Mucosa of descending colon (tissue), 3 donors: ENCODE measurements at regions of chr19 and their contacts with region 1.

Region 1: DNA sequence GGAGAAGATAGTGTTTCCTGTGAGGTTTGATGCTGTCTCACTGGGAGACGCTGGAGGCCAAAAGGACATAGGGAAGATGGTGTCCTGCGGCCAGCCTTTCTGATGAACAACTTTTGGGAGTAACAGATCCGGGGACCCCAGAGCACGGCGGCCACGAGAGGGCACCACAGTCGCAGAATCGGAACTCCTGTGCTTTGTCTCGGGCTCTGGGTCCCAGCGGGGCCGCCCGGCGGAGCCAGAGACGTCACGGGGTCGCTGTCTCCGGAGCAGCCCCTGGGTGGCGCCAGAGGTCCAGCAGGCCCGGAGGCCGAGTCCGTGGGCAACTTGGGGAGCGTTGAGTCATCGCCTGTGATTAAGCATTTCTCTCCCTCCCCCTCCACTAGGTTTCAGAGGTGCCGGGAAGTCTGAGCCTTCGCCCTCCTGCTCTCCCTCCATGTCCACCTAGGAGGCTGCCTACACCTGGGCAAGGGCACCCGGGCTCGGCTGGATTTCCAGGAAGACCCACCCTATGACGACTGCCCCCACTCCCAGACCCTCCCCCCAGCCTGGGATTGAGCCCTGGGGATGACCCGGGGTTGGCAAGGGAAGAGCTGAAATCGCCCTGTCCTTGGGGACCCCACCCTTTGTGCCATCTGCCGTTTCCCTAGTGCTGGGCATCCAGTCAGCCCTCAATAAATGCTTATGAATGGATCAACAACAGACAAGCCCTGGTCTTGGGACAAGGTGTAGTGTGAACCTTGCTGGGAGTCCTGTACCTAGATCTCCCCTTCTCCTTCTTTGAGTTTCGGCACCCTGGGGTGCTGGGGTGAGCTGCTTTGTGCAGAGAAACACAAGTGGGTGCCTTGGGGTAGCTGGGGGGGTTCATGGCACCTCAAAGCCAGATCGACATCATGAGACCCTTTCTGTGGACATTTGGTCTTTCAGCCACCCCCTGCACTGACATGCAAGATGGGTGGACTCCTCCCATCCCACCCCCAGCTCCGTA is 3.4 kb downstream of the NANOS3 start:
- DNase-seq: peak; percentile 98 to 100 (median 100)
- ATAC-seq: peak; percentile 91
- H3K4me3 ChIP-seq: no peak overlapping the region
- H3K4me1 ChIP-seq: peaks cover 41% of the 10 kb centered on the region
- CTCF ChIP-seq: peak; percentile 99

Region 2: GRCh38 chr19:13920940-13921761 is 40.8 kb after region 1 on chr19:
- intact Hi-C with region 1: no loop called
- DNase-seq: no peak
- ATAC-seq: peak; percentile 71
- H3K4me3 ChIP-seq: no peak overlapping the region
- H3K4me1 ChIP-seq: no peaks in the 10 kb centered on the region
- CTCF ChIP-seq: no peak

Region 3: DNA sequence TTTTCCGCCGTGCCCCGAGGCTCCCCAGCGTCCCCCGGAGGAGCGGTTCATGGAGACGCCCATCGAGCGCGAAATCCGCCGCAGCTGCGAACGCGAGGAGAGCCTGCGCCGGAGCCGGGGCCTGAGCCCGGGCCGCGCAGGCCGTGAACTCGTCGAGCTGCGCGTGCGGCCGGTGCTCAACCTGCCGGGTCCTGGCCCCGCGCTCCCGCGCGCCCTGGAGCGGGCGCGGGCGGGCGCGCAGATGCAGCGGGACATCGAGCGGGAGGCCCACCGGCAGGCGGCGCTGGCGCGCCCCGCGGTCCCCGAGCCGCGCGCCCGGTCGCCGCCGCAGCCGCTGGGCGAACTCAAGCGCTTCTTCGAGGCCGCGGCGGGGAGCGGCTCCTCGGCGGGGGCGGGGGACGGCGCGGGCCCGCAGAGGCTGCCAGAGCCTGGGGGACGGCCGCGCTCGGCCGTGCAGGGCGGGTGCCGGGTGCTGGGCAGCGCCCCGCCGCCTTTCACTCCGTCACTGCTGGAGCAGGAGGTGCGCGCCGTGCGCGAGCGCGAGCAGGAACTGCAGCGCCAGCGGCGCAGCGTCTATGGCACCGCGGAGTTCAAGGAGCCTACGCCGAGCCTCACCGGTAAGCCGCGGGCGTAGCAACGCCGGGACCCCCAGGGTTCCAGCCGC is 193.0 kb after region 1 on chr19:
- intact Hi-C with region 1: loop called (anchors 5 to 10 kb)
- DNase-seq: peak; percentile 82 to 87 (median 87)
- ATAC-seq: peak; percentile 62
- H3K4me3 ChIP-seq: peak overlapping the region; percentile 61
- H3K4me1 ChIP-seq: peaks cover 11% of the 10 kb centered on the region
- CTCF ChIP-seq: peak; percentile 75